Left ventricle myocardium superior (tissue), 1 donor: ENCODE measurements at regions of chr1 and their contacts with region 1.

Region 1: DNA sequence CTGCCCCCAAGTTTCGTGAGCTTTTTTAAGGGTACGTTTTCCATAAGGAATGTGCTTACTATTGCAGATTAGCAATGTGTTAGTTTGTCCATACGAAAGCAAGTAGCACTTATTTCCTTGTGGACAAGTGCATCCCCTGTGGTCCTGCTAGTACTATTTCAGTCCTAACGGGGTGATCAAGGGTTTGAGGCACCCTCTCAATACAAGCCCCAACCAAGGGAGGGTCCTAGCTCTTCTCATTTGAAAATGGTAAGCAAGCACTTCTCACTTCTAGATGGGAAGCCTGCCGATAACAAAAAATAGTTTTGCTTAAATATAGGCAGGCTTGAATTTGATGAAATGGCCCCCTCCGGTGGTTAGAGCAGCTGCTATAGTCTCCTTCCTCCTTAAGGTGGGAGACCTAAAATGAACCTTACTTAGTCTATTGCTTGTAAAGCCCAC is 64.0 kb upstream of the HMCN1 start:
- DNase-seq: no peak
- ATAC-seq: peak; percentile 79

Region 2: GRCh38 chr1:185244015-185244747 is 426.0 kb before region 1 on chr1:
- intact Hi-C with region 1: loop called (anchors 5 kb)
- DNase-seq: no peak
- ATAC-seq: no peak

Region 3: DNA sequence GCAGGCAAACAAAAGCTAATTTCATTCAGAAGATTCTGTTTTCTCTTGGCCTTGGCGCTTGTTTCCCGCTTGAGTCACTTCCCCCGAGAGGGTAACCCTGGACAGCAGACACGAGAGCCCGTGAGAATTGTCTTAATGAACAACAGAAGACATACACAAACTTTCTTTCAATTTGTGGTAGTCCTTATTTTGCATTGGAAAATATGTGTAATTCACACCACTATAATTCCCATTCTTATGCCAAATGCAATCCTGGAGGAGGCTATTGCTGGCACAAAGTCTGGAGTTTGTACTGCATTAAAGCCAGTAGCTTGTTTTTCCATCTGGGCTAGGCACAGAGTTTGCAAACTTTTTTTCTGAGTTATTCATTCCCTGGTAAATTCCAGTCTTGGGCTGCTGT is 243.4 kb before region 1 on chr1:
- intact Hi-C with region 1: loop called (anchors 10 kb)
- DNase-seq: peak; percentile 43
- ATAC-seq: peak; percentile 90